WTC11 (cell line): ENCODE measurements at regions of chr11 and their contacts with region 1.

Region 1: GRCh38 chr11:9265211-9266131 is at the start of gene DENND5A:
- DNase-seq: peak; percentile 83
- ATAC-seq: peak; percentile 79
- H3K4me3 Mint-ChIP-seq: peak within 1 kb of the TSS; percentile 93
- H3K27ac Mint-ChIP-seq: peak within 1 kb of the TSS; percentile 93
- H3K4me1 Mint-ChIP-seq: peaks cover 48% of the 10 kb centered on the region
- H3K27me3 Mint-ChIP-seq: no peaks in the 10 kb centered on the region; the same call in 1 of the 2 replicates
- CTCF ChIP-seq: no peak
- total RNA-seq, gene DENND5A: 65.9 to 69.3 TPM (median 69.1 TPM) in 3 replicates

Region 2: GRCh38 chr11:9210922-9211320 is 54.5 kb before region 1 on chr11:
- CTCF ChIA-PET with region 1: no interaction called
- POLR2A ChIA-PET with region 1: no interaction called
- DNase-seq: no peak
- ATAC-seq: no peak
- H3K4me3 Mint-ChIP-seq: no peak overlapping the region
- H3K27ac Mint-ChIP-seq: peak overlapping the region; percentile 62; the same call in 1 of the 2 replicates
- H3K4me1 Mint-ChIP-seq: peaks cover 23% of the 10 kb centered on the region
- H3K27me3 Mint-ChIP-seq: no peaks in the 10 kb centered on the region
- CTCF ChIP-seq: no peak

Region 3: DNA sequence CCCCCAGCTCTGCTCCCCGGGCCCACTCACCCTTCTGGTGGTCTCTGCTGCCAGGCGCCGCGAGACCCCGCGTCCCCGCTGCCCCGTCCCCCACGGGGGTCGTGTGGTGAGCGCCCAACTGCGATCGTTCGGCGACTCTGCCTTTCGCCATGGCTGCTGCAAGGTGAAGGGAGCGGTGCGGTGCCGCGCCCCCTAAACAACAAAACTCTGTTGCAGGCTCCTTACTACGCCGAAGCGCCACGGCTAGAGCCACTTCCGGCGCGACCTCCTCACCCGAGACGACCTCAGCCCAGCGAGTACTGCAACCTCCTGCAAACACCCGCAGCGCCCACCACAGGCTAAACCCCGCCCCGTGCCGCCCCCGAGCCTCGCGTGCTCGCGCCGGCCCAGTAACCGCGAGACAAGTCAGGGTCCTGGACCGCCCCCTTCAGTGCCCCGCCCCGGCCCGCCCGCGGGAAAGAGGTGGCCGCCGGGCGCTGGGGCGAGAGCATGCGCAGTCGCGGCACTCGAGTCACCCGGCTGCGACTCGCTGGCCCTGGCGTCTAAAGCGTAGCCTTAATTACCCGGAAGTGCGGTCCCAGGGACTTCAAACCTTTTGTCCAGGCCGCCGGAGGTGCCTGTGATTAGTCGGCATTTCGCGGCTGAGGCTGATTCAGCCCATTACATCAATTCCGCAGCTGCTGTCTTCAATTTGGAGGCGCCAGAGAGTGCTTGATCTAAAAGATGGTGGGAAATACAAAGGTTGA is 49.0 kb after region 1 on chr11 and contains the start of gene TMEM41B:
- CTCF ChIA-PET with region 1: no interaction called
- POLR2A ChIA-PET with region 1: interaction called, 16 read pairs
- DNase-seq: peak; percentile 99
- ATAC-seq: peak; percentile 93
- H3K4me3 Mint-ChIP-seq: peak within 1 kb of the TSS; percentile 91
- H3K27ac Mint-ChIP-seq: peak within 1 kb of the TSS; percentile 99
- H3K4me1 Mint-ChIP-seq: peaks cover 43% of the 10 kb centered on the region
- H3K27me3 Mint-ChIP-seq: no peaks in the 10 kb centered on the region
- CTCF ChIP-seq: no peak
- total RNA-seq, gene TMEM41B: 45.8 to 46.5 TPM (median 46.1 TPM) in 3 replicates

Region 4: GRCh38 chr11:9363954-9364912 is 98.8 kb after region 1 on chr11:
- CTCF ChIA-PET with region 1: no interaction called
- POLR2A ChIA-PET with region 1: interaction called, 11 read pairs
- DNase-seq: peak; percentile 92
- ATAC-seq: peak; percentile 91
- H3K4me3 Mint-ChIP-seq: peak overlapping the region; percentile 71
- H3K27ac Mint-ChIP-seq: peak overlapping the region; percentile 99
- H3K4me1 Mint-ChIP-seq: peaks cover 27% of the 10 kb centered on the region
- H3K27me3 Mint-ChIP-seq: no peaks in the 10 kb centered on the region
- CTCF ChIP-seq: no peak

Region 5: DNA sequence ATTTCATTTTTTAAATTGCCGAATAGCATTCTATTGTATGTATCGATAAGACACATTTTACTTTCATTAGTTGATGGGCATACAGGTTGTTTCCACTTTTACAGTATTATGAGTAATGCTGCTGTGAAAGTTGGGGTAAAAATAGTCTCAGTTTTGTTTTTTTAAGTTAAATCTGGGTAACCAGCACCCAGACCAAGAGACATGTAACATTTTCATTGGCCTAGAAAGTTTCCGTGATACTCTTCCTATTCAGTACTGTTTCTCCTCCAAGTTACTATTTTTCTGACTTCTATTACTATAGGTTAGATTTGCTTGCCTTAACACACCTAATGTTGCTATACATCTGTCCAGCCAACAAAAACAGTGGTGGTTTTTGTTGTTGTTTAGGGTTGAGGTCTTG is 131.3 kb after region 1 on chr11:
- CTCF ChIA-PET with region 1: no interaction called
- POLR2A ChIA-PET with region 1: interaction called, 11 read pairs
- DNase-seq: no peak
- ATAC-seq: no peak
- H3K4me3 Mint-ChIP-seq: no peak overlapping the region
- H3K27ac Mint-ChIP-seq: peak overlapping the region; percentile 76
- H3K4me1 Mint-ChIP-seq: peaks cover 36% of the 10 kb centered on the region
- H3K27me3 Mint-ChIP-seq: no peaks in the 10 kb centered on the region
- CTCF ChIP-seq: no peak

Region 6: GRCh38 chr11:9438611-9439010 is 173.1 kb after region 1 on chr11:
- CTCF ChIA-PET with region 1: no interaction called
- POLR2A ChIA-PET with region 1: interaction called, 12 read pairs
- DNase-seq: no peak
- ATAC-seq: no peak
- H3K4me3 Mint-ChIP-seq: no peak overlapping the region
- H3K27ac Mint-ChIP-seq: no peak overlapping the region
- H3K4me1 Mint-ChIP-seq: no peaks in the 10 kb centered on the region
- H3K27me3 Mint-ChIP-seq: no peaks in the 10 kb centered on the region
- CTCF ChIP-seq: no peak

Region 7: DNA sequence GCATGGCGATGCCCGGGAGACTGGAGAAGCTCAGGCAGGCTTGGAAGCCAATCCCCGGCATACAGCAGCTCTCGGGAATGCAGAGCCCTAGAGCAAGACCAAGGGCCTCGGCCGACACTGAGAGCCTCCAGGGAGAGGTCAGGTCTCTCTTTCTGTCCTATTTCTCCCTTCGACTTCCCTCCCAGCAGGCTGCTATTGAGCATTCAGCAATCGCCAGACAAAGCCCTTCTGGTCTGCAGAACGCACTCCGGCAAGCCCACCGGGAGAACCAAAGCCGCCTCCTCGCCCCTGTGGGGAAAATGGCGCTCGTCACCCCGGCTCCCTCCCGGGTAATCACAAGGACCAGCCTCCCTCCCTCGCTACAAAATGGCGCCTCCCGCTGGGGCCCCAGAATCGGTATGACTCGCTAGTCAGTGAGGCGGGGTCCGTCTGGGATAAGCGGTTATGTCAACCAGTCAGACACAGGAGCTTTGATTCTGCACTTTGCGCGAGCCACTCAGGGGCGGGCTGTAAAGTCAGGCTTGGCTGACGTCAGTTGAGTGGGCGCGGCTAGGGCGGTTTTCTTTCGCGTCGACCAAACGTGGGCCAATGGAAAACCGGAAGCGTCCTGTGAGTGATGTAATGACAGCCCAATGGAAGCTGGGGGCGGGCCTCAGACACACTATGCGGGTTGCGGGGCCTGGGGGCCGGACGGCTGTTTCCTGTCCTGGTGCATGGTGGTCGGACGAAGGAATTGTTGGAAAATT is 195.0 kb after region 1 on chr11 and contains the start of gene ZNF143:
- CTCF ChIA-PET with region 1: interaction called, 3 read pairs
- POLR2A ChIA-PET with region 1: interaction called, 22 read pairs
- DNase-seq: peak; percentile 100
- ATAC-seq: peak; percentile 96
- H3K4me3 Mint-ChIP-seq: peak within 1 kb of the TSS; percentile 98
- H3K27ac Mint-ChIP-seq: peak within 1 kb of the TSS; percentile 99
- H3K4me1 Mint-ChIP-seq: peaks cover 18% of the 10 kb centered on the region
- H3K27me3 Mint-ChIP-seq: no peaks in the 10 kb centered on the region
- CTCF ChIP-seq: no peak
- total RNA-seq, gene ZNF143: 34.0 to 35.8 TPM (median 34.0 TPM) in 3 replicates